ENCODE measurements at regions of chr11 and their contacts with region 1.

Region 1: DNA sequence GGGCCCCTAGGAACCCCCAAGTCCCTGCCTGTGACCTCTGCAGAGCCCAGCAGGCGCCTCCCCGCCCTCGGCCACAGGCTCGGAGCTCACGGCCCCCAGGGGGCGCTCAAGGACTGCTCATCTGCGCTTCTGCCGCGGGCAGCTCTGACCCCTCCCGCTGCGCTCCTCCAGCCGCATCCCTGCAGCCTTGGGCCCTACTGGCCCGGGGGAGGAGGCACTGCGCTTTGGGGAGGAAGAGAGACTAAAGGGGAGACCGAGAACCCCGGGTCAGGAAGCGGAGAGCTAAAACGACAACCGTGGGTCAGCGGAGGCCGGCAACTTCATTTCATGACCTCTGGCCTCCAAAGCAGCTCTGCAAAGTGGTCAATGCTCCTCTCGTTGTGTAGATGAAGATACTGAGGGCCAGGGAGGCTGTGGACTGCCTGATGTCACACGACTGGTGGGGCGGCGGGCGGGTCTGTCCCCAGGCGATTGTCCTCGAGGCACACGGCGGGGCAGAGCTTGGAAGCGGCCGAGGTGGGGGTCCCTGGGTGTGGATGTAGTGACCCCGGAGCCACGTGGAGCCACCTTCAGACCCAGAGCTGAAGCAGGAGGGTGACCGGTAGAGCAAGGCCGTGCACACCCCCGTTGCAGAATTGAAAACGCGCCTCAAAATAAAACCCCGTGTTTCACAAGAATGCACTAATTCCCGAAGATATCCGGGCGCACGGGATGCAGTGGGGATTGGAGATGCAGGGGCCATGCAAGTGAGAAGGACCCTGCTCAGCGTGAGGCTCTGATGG is 2.7 kb upstream of the KRTAP5-6 start:
- DNase-seq: peak; percentile 85
- H3K4me3 Mint-ChIP-seq: no peak overlapping the region
- H3K27ac Mint-ChIP-seq: no peak overlapping the region
- H3K4me1 Mint-ChIP-seq: peaks cover 6% of the 10 kb centered on the region
- H3K27me3 Mint-ChIP-seq: peaks cover 27% of the 10 kb centered on the region

Region 2: GRCh38 chr11:1706634-1707400 is 12.6 kb after region 1 on chr11:
- CTCF ChIA-PET with region 1: interaction called, 27 read pairs
- POLR2A ChIA-PET with region 1: no interaction called
- intact Hi-C with region 1: no loop called
- DNase-seq: peak; percentile 45
- H3K4me3 Mint-ChIP-seq: no peak overlapping the region
- H3K27ac Mint-ChIP-seq: no peak overlapping the region
- H3K4me1 Mint-ChIP-seq: no peaks in the 10 kb centered on the region
- H3K27me3 Mint-ChIP-seq: no peaks in the 10 kb centered on the region

Region 3: DNA sequence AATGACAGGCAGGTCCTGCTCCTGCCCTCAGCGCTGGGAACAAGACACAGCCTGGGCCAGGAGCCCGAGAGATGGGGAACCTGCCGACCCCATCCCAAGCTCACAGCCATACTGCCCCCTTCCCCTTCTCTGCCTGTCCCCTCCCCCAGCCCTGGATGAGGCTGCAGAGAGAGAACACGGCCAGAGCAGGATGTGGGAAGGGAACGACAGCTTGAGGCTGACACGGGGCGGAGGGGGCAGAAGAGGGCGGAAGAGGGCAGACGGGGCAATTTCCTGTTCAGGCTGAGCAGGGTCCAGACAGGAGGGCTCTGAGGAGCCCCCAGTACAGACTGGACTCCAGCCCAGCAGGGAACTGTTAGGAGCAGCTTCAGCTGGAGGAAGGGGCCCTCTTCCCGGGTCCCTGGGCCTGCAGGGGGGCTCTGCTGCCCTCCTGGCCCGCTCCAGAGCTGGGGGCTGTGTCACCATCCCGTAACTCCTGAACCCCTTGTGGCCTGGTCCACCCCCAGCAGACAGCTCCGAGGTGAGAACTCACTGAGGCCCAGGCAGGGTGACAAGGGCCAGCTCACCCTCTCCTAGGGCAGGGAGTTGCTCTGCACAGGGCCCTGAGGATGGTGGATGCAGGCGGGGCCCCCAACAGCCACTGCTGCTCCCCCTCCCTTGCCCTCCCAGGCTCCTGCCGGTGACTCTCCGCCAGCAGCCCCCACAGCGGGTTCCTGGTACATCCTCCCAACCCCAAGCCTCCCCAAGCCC is 63.8 kb after region 1 on chr11:
- CTCF ChIA-PET with region 1: interaction called, 12 read pairs
- POLR2A ChIA-PET with region 1: no interaction called
- intact Hi-C with region 1: no loop called
- DNase-seq: peak; percentile 76
- H3K4me3 Mint-ChIP-seq: peak overlapping the region; percentile 49
- H3K27ac Mint-ChIP-seq: peak overlapping the region; percentile 83
- H3K4me1 Mint-ChIP-seq: peaks cover 57% of the 10 kb centered on the region
- H3K27me3 Mint-ChIP-seq: no peaks in the 10 kb centered on the region

Region 4: GRCh38 chr11:1832211-1832919 is 138.1 kb after region 1 on chr11:
- CTCF ChIA-PET with region 1: interaction called, 488 read pairs
- POLR2A ChIA-PET with region 1: interaction called, 19 read pairs
- intact Hi-C with region 1: loop called (anchors 1 kb)
- DNase-seq: peak; percentile 66
- H3K4me3 Mint-ChIP-seq: no peak overlapping the region
- H3K27ac Mint-ChIP-seq: no peak overlapping the region
- H3K4me1 Mint-ChIP-seq: no peaks in the 10 kb centered on the region
- H3K27me3 Mint-ChIP-seq: peaks cover 5% of the 10 kb centered on the region

Region 5: GRCh38 chr11:1896923-1897322 is 202.7 kb after region 1 on chr11:
- CTCF ChIA-PET with region 1: interaction called, 10 read pairs
- POLR2A ChIA-PET with region 1: no interaction called
- intact Hi-C with region 1: no loop called
- DNase-seq: no peak
- H3K4me3 Mint-ChIP-seq: no peak overlapping the region
- H3K27ac Mint-ChIP-seq: no peak overlapping the region
- H3K4me1 Mint-ChIP-seq: peaks cover 10% of the 10 kb centered on the region
- H3K27me3 Mint-ChIP-seq: peaks cover 6% of the 10 kb centered on the region

Region 6: DNA sequence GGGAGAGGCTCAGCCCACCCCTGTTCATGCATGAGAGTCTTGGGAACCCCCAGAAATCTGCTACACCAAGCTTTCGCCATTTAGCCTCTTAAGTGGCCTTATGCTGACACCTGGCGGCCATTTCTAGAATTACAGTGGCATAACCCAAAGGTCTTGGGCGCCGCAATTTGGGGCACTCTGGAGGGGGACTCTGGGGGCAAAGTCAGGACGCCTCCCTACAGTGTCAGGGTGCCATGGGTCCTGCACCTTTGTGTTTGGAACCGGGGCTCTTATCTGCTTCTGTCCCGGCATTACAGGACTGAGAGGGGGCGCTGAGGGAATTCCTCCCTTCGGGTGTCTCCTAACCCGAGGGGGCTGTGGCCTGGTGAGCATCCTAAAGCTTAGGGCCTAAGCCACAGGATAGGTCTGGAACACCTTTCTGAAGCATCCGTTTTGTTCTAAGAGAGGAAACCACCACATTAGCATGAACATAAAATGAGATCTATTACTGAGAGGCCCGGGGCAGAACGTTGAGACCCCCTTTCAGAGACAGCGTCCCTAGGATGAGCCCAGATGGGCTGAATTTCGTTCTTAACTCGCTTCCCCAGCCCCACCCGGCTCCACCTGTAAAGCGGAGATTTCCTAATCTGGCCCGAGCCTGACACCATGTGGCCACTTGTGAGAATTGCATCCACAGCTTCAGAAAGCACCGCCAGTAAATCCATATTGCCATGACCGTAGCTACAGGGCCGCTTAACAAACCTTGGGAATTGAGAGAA is 457.4 kb after region 1 on chr11:
- CTCF ChIA-PET with region 1: interaction called, 106 read pairs
- POLR2A ChIA-PET with region 1: interaction called, 3 read pairs
- intact Hi-C with region 1: loop called (anchors 5 kb)
- DNase-seq: peak; percentile 86
- H3K4me3 Mint-ChIP-seq: no peak overlapping the region
- H3K27ac Mint-ChIP-seq: no peak overlapping the region
- H3K4me1 Mint-ChIP-seq: peaks cover 5% of the 10 kb centered on the region
- H3K27me3 Mint-ChIP-seq: peaks cover 32% of the 10 kb centered on the region

Measured in activated CD4-positive, alpha-beta memory T cell treated with anti-CD3 and anti-CD28 coated beads for 36 hours (primary cell).